GM23248 (cell line): ENCODE measurements at regions of chr15 and their contacts with region 1.

Region 1: DNA sequence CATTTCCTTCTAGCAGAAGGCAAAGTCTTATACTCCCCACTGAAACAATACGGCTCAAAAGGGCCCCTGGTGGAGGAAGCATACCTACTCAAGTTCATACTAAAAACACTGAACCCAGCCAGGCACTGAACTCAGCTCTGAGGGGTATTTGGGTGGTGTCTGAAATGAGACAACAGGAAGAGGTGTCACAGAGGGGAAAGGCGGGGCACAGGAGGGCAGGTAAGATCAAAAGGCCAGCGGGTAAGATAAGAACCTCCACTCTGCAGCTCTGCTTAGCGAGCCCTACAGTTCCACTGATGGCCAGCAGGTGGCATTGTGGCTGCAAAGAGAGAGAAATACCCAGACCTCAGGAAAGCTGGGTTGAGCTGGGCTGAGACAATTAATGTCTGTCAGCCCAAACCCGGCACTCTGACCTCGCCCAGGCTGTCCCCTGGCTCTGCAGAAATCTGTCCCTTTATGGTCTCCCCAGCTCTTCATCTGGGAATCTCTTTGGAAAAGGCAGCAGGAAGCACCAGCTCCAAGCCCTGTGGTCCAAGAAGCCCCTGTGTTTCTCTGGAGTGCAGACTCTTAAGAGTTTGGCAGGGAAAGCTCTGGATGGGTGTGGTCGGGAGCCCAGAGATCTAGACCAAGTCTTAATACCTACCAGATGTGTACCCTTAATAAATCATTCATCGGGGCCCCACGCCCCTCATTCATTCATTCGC is 8.4 kb downstream of the MFGE8 start:
- DNase-seq: peak; percentile 82
- H3K4me3 ChIP-seq: no peak overlapping the region
- H3K27ac ChIP-seq: no peak overlapping the region
- H3K4me1 ChIP-seq: peaks cover 7% of the 10 kb centered on the region; the same call in 1 of the 2 replicates
- H3K27me3 ChIP-seq: no peaks in the 10 kb centered on the region

Region 2: GRCh38 chr15:89017370-89018066 is 112.7 kb after region 1 on chr15:
- in situ Hi-C with region 1: loop called (anchors 10 kb)
- DNase-seq: peak; percentile 91
- H3K4me3 ChIP-seq: peak overlapping the region; percentile 55
- H3K27ac ChIP-seq: peak overlapping the region; percentile 77
- H3K4me1 ChIP-seq: peaks cover 42% of the 10 kb centered on the region
- H3K27me3 ChIP-seq: no peaks in the 10 kb centered on the region

Region 3: GRCh38 chr15:89177633-89178306 is 273.0 kb after region 1 on chr15:
- in situ Hi-C with region 1: loop called (anchors 10 kb)
- DNase-seq: peak; percentile 85
- H3K4me3 ChIP-seq: no peak overlapping the region
- H3K27ac ChIP-seq: no peak overlapping the region
- H3K4me1 ChIP-seq: no peaks in the 10 kb centered on the region; the same call in 1 of the 2 replicates
- H3K27me3 ChIP-seq: no peaks in the 10 kb centered on the region

Region 4: GRCh38 chr15:89187976-89188514 is 283.3 kb after region 1 on chr15:
- in situ Hi-C with region 1: no loop called
- DNase-seq: peak; percentile 35
- H3K4me3 ChIP-seq: no peak overlapping the region
- H3K27ac ChIP-seq: no peak overlapping the region
- H3K4me1 ChIP-seq: peaks cover 10% of the 10 kb centered on the region
- H3K27me3 ChIP-seq: no peaks in the 10 kb centered on the region